Left lung (tissue), 14 donors: ENCODE measurements at regions of chr17 and their contacts with region 1.

Region 1: GRCh38 chr17:79087428-79088143 is 13.0 kb downstream of the ENGASE start:
- DNase-seq: peak; percentile 36 to 90 (median 65)
- ATAC-seq: peak; percentile 85
- H3K4me3 ChIP-seq: no peak overlapping the region
- H3K27ac ChIP-seq: no peak overlapping the region
- H3K4me1 ChIP-seq: peaks cover 0 to 4% of the 10 kb centered on the region in 2 donors
- H3K27me3 ChIP-seq: peaks cover 4 to 27% of the 10 kb centered on the region in 2 donors
- CTCF ChIP-seq: peak; percentile 85 to 92

Region 2: GRCh38 chr17:79009397-79010308 is 77.9 kb before region 1 on chr17 and contains the start of gene CANT1:
- intact Hi-C with region 1: no loop called
- DNase-seq: peak; percentile 85 to 96 (median 91)
- ATAC-seq: peak; percentile 91
- H3K4me3 ChIP-seq: peak within 1 kb of the TSS; percentile 58 to 70
- H3K27ac ChIP-seq: peak within 1 kb of the TSS; percentile 81 to 88
- H3K4me1 ChIP-seq: peaks cover 21 to 38% of the 10 kb centered on the region in 2 donors
- H3K27me3 ChIP-seq: no peaks in the 10 kb centered on the region
- CTCF ChIP-seq: no peak
- polyA plus RNA-seq, gene CANT1: 37.9 to 47.7 (median 40.0) TPM

Region 3: DNA sequence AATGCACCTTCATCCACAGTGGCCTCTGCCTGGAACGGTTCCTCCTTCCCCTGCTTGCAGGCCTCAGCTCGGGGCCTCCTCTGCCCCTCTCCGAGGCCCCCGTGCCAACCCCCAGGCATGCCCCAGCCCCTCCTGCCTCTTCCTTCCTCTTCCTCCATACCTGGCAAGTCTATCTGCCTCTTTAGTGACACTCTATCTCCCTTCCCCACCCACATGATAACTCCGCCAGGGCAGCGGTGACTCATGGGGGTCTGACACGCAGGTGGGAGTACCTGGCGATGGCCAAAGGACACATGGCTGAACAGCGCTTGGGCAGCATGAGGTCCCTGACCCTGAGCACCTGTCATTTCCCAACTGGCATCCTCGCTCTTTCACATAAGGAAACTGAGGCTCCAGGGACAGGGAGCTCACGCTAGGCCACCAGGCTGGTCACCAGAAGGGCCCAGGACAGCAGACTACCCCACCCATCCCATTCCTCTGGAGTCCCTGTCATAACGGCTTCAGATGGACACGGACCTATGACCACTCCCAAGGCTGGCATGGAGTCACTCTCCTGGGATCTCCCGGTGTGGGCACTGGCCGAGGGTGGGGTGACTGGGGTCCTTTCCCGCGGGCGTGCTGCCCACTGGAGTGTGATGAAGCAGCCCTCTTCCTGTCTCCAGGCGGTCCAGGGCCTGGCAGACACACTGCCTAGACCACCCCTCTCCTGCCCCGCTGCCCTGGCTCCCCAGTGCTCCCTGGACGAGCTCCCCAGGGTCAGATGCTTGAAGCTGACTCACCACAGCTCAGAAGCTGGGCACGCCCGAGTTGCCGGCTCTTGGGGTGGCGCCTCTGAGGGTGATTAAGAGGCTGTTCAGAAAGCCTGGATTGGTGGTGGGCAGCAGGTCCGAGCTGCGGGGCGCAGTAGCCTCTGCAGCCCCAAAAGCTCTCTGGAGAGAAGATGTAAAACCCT is 87.6 kb after region 1 on chr17:
- intact Hi-C with region 1: no loop called
- DNase-seq: no peak
- ATAC-seq: no peak
- H3K4me3 ChIP-seq: no peak overlapping the region
- H3K27ac ChIP-seq: no peak overlapping the region
- H3K4me1 ChIP-seq: no peaks in the 10 kb centered on the region
- H3K27me3 ChIP-seq: peaks cover 0 to 43% of the 10 kb centered on the region in 2 donors
- CTCF ChIP-seq: no peak

Region 4: DNA sequence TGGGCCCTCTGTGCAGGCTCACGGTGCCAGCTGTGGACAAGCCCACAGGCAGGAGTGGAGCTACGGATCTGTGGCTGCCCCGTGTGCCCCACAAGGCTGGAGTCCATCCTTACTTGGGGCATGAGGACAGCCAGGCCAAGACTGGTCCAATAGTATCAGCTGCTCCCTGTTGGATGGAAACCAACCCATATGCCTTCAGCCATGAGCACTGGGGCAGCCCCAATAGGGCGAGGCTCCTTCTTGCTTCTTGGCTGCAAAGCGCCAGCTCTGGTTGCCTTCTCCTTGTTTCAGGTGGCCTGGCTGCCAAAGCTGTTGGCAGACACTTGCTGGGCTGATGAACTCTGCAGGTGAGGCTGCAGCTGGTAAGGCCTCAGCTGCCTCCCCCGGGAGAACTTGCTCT is 175.0 kb after region 1 on chr17:
- intact Hi-C with region 1: no loop called
- DNase-seq: no peak
- ATAC-seq: no peak
- H3K4me3 ChIP-seq: no peak overlapping the region
- H3K27ac ChIP-seq: no peak overlapping the region
- H3K4me1 ChIP-seq: no peaks in the 10 kb centered on the region
- H3K27me3 ChIP-seq: peaks cover 0 to 92% of the 10 kb centered on the region in 2 donors
- CTCF ChIP-seq: no peak

Region 5: GRCh38 chr17:79393358-79394202 is 306.0 kb after region 1 on chr17:
- intact Hi-C with region 1: loop called in 1 of 2 experiments (anchors 5 kb)
- DNase-seq: peak; percentile 52 to 90 (median 74)
- ATAC-seq: peak; percentile 89
- H3K4me3 ChIP-seq: no peak overlapping the region
- H3K27ac ChIP-seq: no peak overlapping the region
- H3K4me1 ChIP-seq: no peaks in the 10 kb centered on the region
- H3K27me3 ChIP-seq: peaks cover 26 to 100% of the 10 kb centered on the region in 2 donors
- CTCF ChIP-seq: peak; percentile 86 to 89